Endothelial cell of umbilical vein (primary cell): ENCODE measurements at regions of chr6 and their contacts with region 1.

Region 1: GRCh38 chr6:156776840-156777576 is at the start of gene ARID1B:
- DNase-seq: peak; percentile 81
- H3K4me3 ChIP-seq: peak within 1 kb of the TSS; percentile 82 to 97 (median 90)
- H3K27ac ChIP-seq: peak within 1 kb of the TSS; percentile 85
- H3K4me1 ChIP-seq: peaks cover 33% of the 10 kb centered on the region
- H3K27me3 ChIP-seq: no peaks in the 10 kb centered on the region
- CTCF ChIP-seq: no peak
- POLR2A ChIP-seq: peak; percentile 46
- total RNA-seq, gene ARID1B: 81.3 and 89.5 TPM in 2 replicates

Region 2: DNA sequence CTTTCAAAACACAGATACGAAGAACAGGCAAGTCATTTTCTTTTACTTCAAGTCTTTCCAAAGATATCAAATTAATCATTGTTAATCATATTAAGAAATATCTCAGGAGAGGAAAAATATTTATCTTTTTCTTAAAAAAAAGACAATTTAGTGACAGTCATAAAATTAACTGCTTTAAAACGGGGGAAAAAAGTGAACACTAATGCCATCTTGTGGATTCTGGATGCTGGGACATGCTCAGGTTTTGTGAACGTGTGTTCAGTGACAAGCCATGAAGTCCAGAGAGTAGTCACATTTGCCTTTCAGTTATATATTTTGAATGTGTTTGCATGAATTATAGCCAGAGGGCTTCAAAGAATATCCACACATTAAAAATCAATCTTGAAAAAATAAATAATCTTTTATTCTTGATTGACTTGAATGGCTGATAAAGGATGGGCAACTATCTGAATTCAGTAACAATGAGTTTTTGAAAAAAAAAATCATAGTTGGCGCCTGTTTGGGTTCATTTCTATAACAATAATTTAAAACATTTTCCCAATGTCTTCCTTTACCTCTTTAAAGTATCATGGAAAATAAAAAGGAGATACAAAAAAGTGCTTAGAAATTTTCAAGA is 1246.7 kb before region 1 on chr6:
- CTCF ChIA-PET with region 1: no interaction called
- POLR2A ChIA-PET with region 1: no interaction called
- dilution Hi-C with region 1: no loop called
- intact Hi-C with region 1: loop called (anchors 5 kb)
- DNase-seq: peak; percentile 77
- H3K4me3 ChIP-seq: no peak overlapping the region
- H3K27ac ChIP-seq: peak overlapping the region; percentile 83
- H3K4me1 ChIP-seq: peaks cover 16% of the 10 kb centered on the region
- H3K27me3 ChIP-seq: no peaks in the 10 kb centered on the region
- CTCF ChIP-seq: peak; percentile 55 to 60
- POLR2A ChIP-seq: no peak

Region 3: GRCh38 chr6:156564127-156564806 is 212.7 kb before region 1 on chr6:
- CTCF ChIA-PET with region 1: interaction called, 7 read pairs
- POLR2A ChIA-PET with region 1: no interaction called
- dilution Hi-C with region 1: no loop called
- intact Hi-C with region 1: loop called (anchors 1 kb)
- DNase-seq: peak; percentile 67
- H3K4me3 ChIP-seq: no peak overlapping the region
- H3K27ac ChIP-seq: no peak overlapping the region
- H3K4me1 ChIP-seq: no peaks in the 10 kb centered on the region
- H3K27me3 ChIP-seq: peaks cover 0 to 4% of the 10 kb centered on the region in 2 experiments
- CTCF ChIP-seq: peak; percentile 88 to 94
- POLR2A ChIP-seq: no peak

Region 4: DNA sequence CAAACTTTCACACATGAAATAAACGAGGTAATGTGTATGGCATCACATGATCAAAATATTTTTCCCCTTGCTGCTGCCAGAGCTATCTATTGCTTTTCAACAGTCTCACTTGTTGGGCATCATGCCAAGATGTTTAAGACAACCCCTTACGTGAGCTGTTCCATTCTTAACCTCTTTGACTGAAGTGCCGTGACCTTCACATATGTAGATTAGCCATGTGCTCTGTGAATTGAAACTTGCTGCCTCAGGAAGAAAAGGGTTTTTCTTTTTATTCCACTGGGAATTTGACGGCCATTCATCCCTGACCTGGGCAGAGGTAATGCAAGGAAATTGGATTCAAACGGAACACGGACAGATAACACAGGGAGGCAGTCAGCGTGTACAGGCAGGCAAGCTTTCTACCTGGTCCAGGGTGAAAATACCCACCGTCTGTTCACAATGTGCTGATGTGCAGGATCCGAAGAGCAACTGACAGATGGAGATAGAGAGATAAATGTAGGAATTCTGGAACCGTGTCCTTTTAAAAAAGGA is 14.4 kb after region 1 on chr6:
- CTCF ChIA-PET with region 1: interaction called, 3 read pairs
- POLR2A ChIA-PET with region 1: no interaction called
- dilution Hi-C with region 1: no loop called
- intact Hi-C with region 1: loop called (anchors 1 kb)
- DNase-seq: peak; percentile 65
- H3K4me3 ChIP-seq: no peak overlapping the region
- H3K27ac ChIP-seq: no peak overlapping the region
- H3K4me1 ChIP-seq: peaks cover 7% of the 10 kb centered on the region
- H3K27me3 ChIP-seq: no peaks in the 10 kb centered on the region
- CTCF ChIP-seq: no peak
- POLR2A ChIP-seq: no peak

Region 5: GRCh38 chr6:157021344-157021992 is 244.5 kb after region 1 on chr6:
- CTCF ChIA-PET with region 1: interaction called, 3 read pairs
- POLR2A ChIA-PET with region 1: interaction called, 3 read pairs
- dilution Hi-C with region 1: no loop called
- intact Hi-C with region 1: loop called (anchors 1 kb)
- DNase-seq: peak; percentile 85
- H3K4me3 ChIP-seq: peak overlapping the region; percentile 39 to 94 (median 92)
- H3K27ac ChIP-seq: peak overlapping the region; percentile 92
- H3K4me1 ChIP-seq: peaks cover 18% of the 10 kb centered on the region
- H3K27me3 ChIP-seq: no peaks in the 10 kb centered on the region
- CTCF ChIP-seq: peak; percentile 24 to 46
- POLR2A ChIP-seq: peak; percentile 94

Region 6: GRCh38 chr6:157184202-157185020 is 407.4 kb after region 1 on chr6:
- CTCF ChIA-PET with region 1: no interaction called
- POLR2A ChIA-PET with region 1: no interaction called
- dilution Hi-C with region 1: no loop called
- intact Hi-C with region 1: loop called (anchors 5 kb)
- DNase-seq: peak; percentile 44
- H3K4me3 ChIP-seq: no peak overlapping the region
- H3K27ac ChIP-seq: no peak overlapping the region
- H3K4me1 ChIP-seq: no peaks in the 10 kb centered on the region
- H3K27me3 ChIP-seq: no peaks in the 10 kb centered on the region
- CTCF ChIP-seq: peak; percentile 82 to 89
- POLR2A ChIP-seq: no peak